ENCODE measurements at regions of chr6 and their contacts with region 1.

Region 1: GRCh38 chr6:167079853-167080297 is 43.0 kb upstream of the CCR6 start:
- DNase-seq: peak; percentile 93
- ATAC-seq: peak; percentile 99
- H3K4me3 ChIP-seq: peak overlapping the region in 1 of 5 experiments; percentile 48
- H3K4me3 Mint-ChIP-seq: peak overlapping the region; percentile 51
- H3K27ac ChIP-seq: peak overlapping the region; percentile 74 to 87
- H3K27ac Mint-ChIP-seq: peak overlapping the region; percentile 93
- H3K4me1 ChIP-seq: peaks cover 39 to 46% of the 10 kb centered on the region in 2 donors
- H3K4me1 Mint-ChIP-seq: peaks cover 36% of the 10 kb centered on the region
- H3K27me3 ChIP-seq: no peaks in the 10 kb centered on the region
- H3K27me3 Mint-ChIP-seq: no peaks in the 10 kb centered on the region
- CTCF ChIP-seq: peak; percentile 79

Region 2: DNA sequence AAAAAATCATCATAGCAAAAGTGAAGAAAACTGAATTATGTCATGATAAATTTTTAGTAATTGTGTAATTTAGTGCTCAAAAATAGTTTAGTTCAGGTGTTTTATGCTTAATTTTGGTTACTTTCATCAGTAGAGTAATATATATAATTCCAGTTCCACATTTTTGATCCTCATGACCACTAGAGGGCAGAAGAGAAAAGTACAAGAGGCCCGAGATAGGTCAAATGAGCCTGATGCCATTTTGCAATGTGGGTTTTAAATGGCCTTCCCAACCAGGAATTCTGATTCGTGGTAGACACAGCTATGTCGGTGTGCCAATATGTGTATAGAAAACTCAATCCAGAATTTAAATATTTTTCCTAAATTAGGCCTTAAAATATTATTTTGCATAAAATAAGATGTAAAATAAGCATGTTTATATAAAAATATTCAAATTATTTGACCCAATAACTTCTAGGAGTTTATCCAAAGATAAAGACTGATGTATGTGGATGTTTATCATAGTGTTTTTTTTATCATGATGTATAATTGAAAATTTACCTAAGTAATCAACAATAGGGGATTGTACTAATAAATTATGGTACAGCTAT is 293.1 kb before region 1 on chr6:
- CTCF ChIA-PET with region 1: no interaction called
- POLR2A ChIA-PET with region 1: no interaction called
- intact Hi-C with region 1: loop called (anchors 5 kb)
- DNase-seq: peak; percentile 80
- ATAC-seq: peak; percentile 54
- H3K4me3 ChIP-seq: no peak overlapping the region
- H3K4me3 Mint-ChIP-seq: no peak overlapping the region
- H3K27ac ChIP-seq: no peak overlapping the region
- H3K27ac Mint-ChIP-seq: no peak overlapping the region
- H3K4me1 ChIP-seq: no peaks in the 10 kb centered on the region
- H3K4me1 Mint-ChIP-seq: no peaks in the 10 kb centered on the region
- H3K27me3 ChIP-seq: no peaks in the 10 kb centered on the region
- H3K27me3 Mint-ChIP-seq: no peaks in the 10 kb centered on the region
- CTCF ChIP-seq: peak; percentile 88

Region 3: DNA sequence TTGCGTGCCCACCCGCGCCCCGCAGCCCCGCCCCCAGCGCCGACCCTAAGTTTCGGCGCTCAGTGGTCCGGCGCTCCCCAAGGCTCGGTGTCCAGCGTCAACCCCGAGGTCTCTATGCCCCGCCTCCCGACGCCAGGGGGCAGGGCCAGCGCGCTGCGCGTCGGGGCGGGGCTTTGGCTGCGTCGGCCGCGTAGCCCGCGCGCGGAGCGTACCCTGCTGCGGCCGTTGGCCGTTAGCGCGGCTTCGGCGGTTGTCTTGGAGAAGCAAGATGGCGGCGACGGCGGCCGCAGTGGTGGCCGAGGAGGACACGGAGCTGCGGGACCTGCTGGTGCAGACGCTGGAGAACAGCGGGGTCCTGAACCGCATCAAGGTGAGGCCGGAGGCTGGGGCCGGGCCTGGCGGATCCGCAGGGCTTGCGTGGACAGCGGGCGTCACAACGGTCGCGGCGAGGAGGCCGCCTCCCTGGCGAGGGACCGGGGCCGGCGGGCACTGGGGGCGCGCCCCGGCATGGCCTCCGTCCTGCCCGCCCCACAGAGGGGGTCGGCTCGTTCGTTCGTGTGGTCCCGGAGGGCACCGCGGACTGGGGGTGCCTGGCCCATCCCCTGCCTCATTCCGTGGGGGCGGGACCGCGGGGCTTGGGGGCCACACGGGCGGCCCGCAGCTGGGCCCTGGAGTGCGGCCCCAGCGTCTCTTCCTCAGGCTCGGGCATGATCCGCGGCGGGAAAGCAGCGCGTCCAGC is 80.6 kb before region 1 on chr6 and contains the start of gene CEP43:
- CTCF ChIA-PET with region 1: no interaction called
- POLR2A ChIA-PET with region 1: no interaction called
- intact Hi-C with region 1: loop called (anchors 2 kb)
- DNase-seq: peak; percentile 98
- ATAC-seq: peak; percentile 95
- H3K4me3 ChIP-seq: peak within 1 kb of the TSS; percentile 70 to 95 (median 91)
- H3K4me3 Mint-ChIP-seq: peak within 1 kb of the TSS; percentile 91
- H3K27ac ChIP-seq: peak within 1 kb of the TSS; percentile 31 to 83
- H3K27ac Mint-ChIP-seq: peak within 1 kb of the TSS; percentile 86
- H3K4me1 ChIP-seq: peaks cover 21 to 23% of the 10 kb centered on the region in 2 donors
- H3K4me1 Mint-ChIP-seq: peaks cover 29% of the 10 kb centered on the region
- H3K27me3 ChIP-seq: no peaks in the 10 kb centered on the region
- H3K27me3 Mint-ChIP-seq: no peaks in the 10 kb centered on the region
- CTCF ChIP-seq: no peak
- total RNA-seq, gene CEP43: 33.7 and 39.7 TPM in 2 replicates

Region 4: GRCh38 chr6:167047554-167047953 is 32.3 kb before region 1 on chr6:
- CTCF ChIA-PET with region 1: interaction called, 3 read pairs
- POLR2A ChIA-PET with region 1: no interaction called
- intact Hi-C with region 1: loop called (anchors 2 kb)
- DNase-seq: peak; percentile 86
- ATAC-seq: peak; percentile 81
- H3K4me3 ChIP-seq: peak overlapping the region in 4 of 5 experiments; percentile 31 to 57 (median 44)
- H3K4me3 Mint-ChIP-seq: peak overlapping the region; percentile 57
- H3K27ac ChIP-seq: peak overlapping the region; percentile 70 to 88
- H3K27ac Mint-ChIP-seq: peak overlapping the region; percentile 79
- H3K4me1 ChIP-seq: peaks cover 36 to 47% of the 10 kb centered on the region in 2 donors
- H3K4me1 Mint-ChIP-seq: peaks cover 55% of the 10 kb centered on the region
- H3K27me3 ChIP-seq: no peaks in the 10 kb centered on the region
- H3K27me3 Mint-ChIP-seq: no peaks in the 10 kb centered on the region
- CTCF ChIP-seq: no peak

Region 5: GRCh38 chr6:167113935-167114910 is 34.3 kb after region 1 on chr6:
- CTCF ChIA-PET with region 1: interaction called, 7 read pairs
- POLR2A ChIA-PET with region 1: interaction called, 3 read pairs
- intact Hi-C with region 1: loop called (anchors 1 kb)
- DNase-seq: peak; percentile 98
- ATAC-seq: peak; percentile 78
- H3K4me3 ChIP-seq: peak overlapping the region; percentile 46 to 77 (median 61)
- H3K4me3 Mint-ChIP-seq: peak overlapping the region; percentile 84
- H3K27ac ChIP-seq: peak overlapping the region; percentile 98 to 100
- H3K27ac Mint-ChIP-seq: peak overlapping the region; percentile 96
- H3K4me1 ChIP-seq: peaks cover 85 to 94% of the 10 kb centered on the region in 2 donors
- H3K4me1 Mint-ChIP-seq: peaks cover 94% of the 10 kb centered on the region
- H3K27me3 ChIP-seq: no peaks in the 10 kb centered on the region
- H3K27me3 Mint-ChIP-seq: no peaks in the 10 kb centered on the region
- CTCF ChIP-seq: no peak